ENCODE measurements at regions of chrX and their contacts with region 1.

Region 1: GRCh38 chrX:17689971-17690409 is 47.3 kb upstream of the SCML1 start:
- DNase-seq: peak; percentile 53
- ATAC-seq: peak; percentile 57
- H3K4me3 Mint-ChIP-seq: no peak overlapping the region
- H3K27ac Mint-ChIP-seq: no peak overlapping the region
- H3K4me1 Mint-ChIP-seq: peaks cover 4% of the 10 kb centered on the region
- H3K27me3 Mint-ChIP-seq: peaks cover 1% of the 10 kb centered on the region

Region 2: GRCh38 chrX:17120816-17121215 is 569.2 kb before region 1 on chrX:
- CTCF ChIA-PET with region 1: no interaction called
- POLR2A ChIA-PET with region 1: no interaction called
- intact Hi-C with region 1: loop called in 1 of 2 experiments (anchors 2 kb)
- DNase-seq: no peak
- ATAC-seq: no peak
- H3K4me3 Mint-ChIP-seq: no peak overlapping the region
- H3K27ac Mint-ChIP-seq: no peak overlapping the region
- H3K4me1 Mint-ChIP-seq: no peaks in the 10 kb centered on the region
- H3K27me3 Mint-ChIP-seq: no peaks in the 10 kb centered on the region

Region 3: GRCh38 chrX:17242470-17242869 is 447.5 kb before region 1 on chrX:
- CTCF ChIA-PET with region 1: interaction called, 4 read pairs
- POLR2A ChIA-PET with region 1: no interaction called
- intact Hi-C with region 1: loop called (anchors 1 kb)
- DNase-seq: peak; percentile 41
- ATAC-seq: peak; percentile 26
- H3K4me3 Mint-ChIP-seq: no peak overlapping the region
- H3K27ac Mint-ChIP-seq: no peak overlapping the region
- H3K4me1 Mint-ChIP-seq: no peaks in the 10 kb centered on the region
- H3K27me3 Mint-ChIP-seq: peaks cover 2% of the 10 kb centered on the region

Region 4: DNA sequence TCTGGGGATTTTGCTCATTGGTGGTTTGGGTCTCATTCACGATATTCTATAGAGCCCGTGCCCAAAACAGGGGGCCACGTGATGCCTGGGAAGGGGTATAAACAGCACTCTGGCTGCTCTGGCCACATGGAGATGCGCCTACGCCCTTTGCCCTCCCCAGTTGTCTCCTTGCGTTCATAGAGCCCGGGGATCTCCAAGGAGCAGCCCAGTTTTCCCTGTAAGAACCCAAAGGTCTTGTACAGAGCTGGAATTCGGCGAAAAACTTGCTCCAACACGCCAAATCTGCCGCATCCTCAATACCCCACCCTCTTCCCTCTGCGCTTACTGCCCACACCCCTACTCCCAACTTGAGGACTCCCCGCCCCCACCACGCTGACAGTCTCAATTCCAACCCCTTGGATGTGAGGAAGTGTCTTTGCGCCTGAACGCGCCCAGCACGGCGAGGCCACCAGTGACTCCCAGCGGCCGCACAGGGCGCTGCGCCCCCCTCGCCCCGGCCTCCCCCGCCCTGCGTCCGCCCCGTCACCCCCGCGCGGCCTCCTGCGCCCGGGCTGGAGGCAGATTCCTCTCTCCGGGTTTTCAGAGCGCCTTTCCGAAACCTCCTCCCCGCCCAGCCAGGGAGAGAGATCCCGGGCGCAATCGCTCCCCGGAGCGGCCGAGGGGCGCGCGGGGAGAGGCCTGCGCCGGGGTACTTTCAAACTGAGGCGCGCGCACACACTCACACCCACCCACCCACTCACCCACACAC is 315.2 kb before region 1 on chrX and contains the start of gene NHS:
- CTCF ChIA-PET with region 1: no interaction called
- POLR2A ChIA-PET with region 1: no interaction called
- intact Hi-C with region 1: loop called in 1 of 2 experiments (anchors 10 kb)
- DNase-seq: peak; percentile 43
- ATAC-seq: no peak
- H3K4me3 Mint-ChIP-seq: peak within 1 kb of the TSS; percentile 43
- H3K27ac Mint-ChIP-seq: no peak within 1 kb of the TSS
- H3K4me1 Mint-ChIP-seq: peaks cover 13% of the 10 kb centered on the region
- H3K27me3 Mint-ChIP-seq: peaks cover 29% of the 10 kb centered on the region
- total RNA-seq, gene NHS: 6.7 to 10.2 TPM

Region 5: GRCh38 chrX:17535229-17535628 is 154.8 kb before region 1 on chrX:
- CTCF ChIA-PET with region 1: interaction called, 5 read pairs
- POLR2A ChIA-PET with region 1: no interaction called
- intact Hi-C with region 1: loop called (anchors 1 kb)
- DNase-seq: peak; percentile 67
- ATAC-seq: peak; percentile 66
- H3K4me3 Mint-ChIP-seq: no peak overlapping the region
- H3K27ac Mint-ChIP-seq: no peak overlapping the region
- H3K4me1 Mint-ChIP-seq: peaks cover 15% of the 10 kb centered on the region
- H3K27me3 Mint-ChIP-seq: peaks cover 3% of the 10 kb centered on the region

Region 6: DNA sequence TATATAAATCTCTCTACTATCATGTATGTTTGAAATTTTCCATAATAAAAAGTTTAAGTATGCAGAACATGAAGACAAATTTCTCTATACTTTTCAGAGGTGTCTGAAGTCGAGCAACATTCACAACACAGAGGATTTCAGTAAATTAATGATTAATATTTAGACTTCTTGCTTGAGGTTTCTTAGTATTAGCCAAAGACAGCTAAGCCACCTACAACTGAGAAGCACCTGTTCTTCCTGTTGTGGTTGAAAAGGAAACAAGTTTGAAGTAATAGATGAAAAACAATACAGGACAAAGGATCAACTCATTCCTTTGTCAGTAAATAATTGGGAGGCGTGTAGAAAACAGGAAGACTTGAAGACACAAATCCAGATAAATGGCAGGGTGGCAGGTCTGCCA is 68.4 kb after region 1 on chrX:
- CTCF ChIA-PET with region 1: no interaction called
- POLR2A ChIA-PET with region 1: no interaction called
- intact Hi-C with region 1: no loop called
- DNase-seq: no peak
- ATAC-seq: no peak
- H3K4me3 Mint-ChIP-seq: no peak overlapping the region
- H3K27ac Mint-ChIP-seq: no peak overlapping the region
- H3K4me1 Mint-ChIP-seq: peaks cover 6% of the 10 kb centered on the region
- H3K27me3 Mint-ChIP-seq: no peaks in the 10 kb centered on the region

Measured in activated CD4-positive, alpha-beta T cell treated with anti-CD3 and anti-CD28 coated beads for 36 hours (primary cell).